A673 (cell line): ENCODE measurements at regions of chr22 and their contacts with region 1.

Region 1: GRCh38 chr22:45248830-45249561 is 8.3 kb upstream of the KIAA0930 start:
- DNase-seq: no peak
- H3K4me3 ChIP-seq: no peak overlapping the region
- H3K27ac ChIP-seq: no peak overlapping the region
- H3K4me1 ChIP-seq: no peaks in the 10 kb centered on the region
- H3K27me3 ChIP-seq: no peaks in the 10 kb centered on the region
- CTCF ChIP-seq: no peak

Region 2: DNA sequence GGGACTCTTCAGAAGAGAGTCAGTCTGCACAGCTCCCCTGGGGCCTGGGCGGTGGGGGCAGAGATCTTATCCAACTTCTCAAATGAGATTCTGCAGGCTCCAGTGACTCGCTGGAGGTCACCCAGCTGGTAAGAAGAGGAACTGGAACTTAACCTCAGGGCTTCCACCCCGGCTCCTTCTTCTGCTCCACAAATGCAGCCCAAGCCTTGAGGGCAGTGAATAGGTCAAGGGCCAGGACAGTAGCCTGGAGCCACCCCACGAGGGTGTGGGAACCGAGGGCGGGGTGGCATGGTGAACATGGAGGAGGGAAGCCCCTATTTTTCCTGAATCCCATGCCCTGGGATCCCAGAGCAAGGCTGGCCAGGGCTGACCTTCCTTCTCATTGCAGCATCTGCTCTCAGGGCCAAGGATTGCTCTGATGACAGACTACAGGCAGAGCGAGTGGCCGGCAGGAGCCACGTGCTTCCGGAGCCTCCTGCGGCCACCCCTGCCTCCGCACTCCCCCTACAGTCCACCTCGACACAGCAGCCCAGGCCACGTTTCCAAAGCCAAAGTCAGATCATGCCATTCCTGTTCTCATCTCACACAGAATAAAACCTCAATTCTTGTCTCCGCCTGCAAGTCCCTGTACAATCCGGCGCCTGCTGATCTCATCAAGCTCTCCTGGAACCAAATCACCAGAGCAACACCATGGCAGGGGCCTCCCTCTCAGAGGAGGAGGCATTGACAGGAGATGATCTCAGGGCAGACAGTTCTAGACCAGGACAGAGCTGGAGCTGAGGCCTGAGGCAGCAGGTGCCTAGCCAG is 14.7 kb after region 1 on chr22:
- CTCF ChIA-PET with region 1: interaction called, 7 read pairs
- POLR2A ChIA-PET with region 1: interaction called, 10 read pairs
- intact Hi-C with region 1: no loop called
- DNase-seq: peak; percentile 31
- H3K4me3 ChIP-seq: no peak overlapping the region
- H3K27ac ChIP-seq: no peak overlapping the region
- H3K4me1 ChIP-seq: no peaks in the 10 kb centered on the region
- H3K27me3 ChIP-seq: no peaks in the 10 kb centered on the region
- CTCF ChIP-seq: no peak

Region 3: GRCh38 chr22:45911601-45912271 is 662.7 kb after region 1 on chr22:
- CTCF ChIA-PET with region 1: no interaction called
- POLR2A ChIA-PET with region 1: no interaction called
- intact Hi-C with region 1: no loop called
- DNase-seq: no peak
- H3K4me3 ChIP-seq: no peak overlapping the region
- H3K27ac ChIP-seq: no peak overlapping the region
- H3K4me1 ChIP-seq: no peaks in the 10 kb centered on the region
- H3K27me3 ChIP-seq: no peaks in the 10 kb centered on the region
- CTCF ChIP-seq: no peak